ENCODE measurements at regions of chr13 and their contacts with region 1.

Region 1: GRCh38 chr13:99969919-99970621 is 1.5 kb downstream of the ZIC5 start:
- DNase-seq: no peak
- ATAC-seq: peak; percentile 83
- H3K4me3 ChIP-seq: peak overlapping the region; percentile 59 to 69
- H3K27ac ChIP-seq: peak overlapping the region; percentile 95
- H3K4me1 ChIP-seq: peaks cover 16% of the 10 kb centered on the region
- H3K27me3 ChIP-seq: no peaks in the 10 kb centered on the region
- CTCF ChIP-seq: no peak

Region 2: DNA sequence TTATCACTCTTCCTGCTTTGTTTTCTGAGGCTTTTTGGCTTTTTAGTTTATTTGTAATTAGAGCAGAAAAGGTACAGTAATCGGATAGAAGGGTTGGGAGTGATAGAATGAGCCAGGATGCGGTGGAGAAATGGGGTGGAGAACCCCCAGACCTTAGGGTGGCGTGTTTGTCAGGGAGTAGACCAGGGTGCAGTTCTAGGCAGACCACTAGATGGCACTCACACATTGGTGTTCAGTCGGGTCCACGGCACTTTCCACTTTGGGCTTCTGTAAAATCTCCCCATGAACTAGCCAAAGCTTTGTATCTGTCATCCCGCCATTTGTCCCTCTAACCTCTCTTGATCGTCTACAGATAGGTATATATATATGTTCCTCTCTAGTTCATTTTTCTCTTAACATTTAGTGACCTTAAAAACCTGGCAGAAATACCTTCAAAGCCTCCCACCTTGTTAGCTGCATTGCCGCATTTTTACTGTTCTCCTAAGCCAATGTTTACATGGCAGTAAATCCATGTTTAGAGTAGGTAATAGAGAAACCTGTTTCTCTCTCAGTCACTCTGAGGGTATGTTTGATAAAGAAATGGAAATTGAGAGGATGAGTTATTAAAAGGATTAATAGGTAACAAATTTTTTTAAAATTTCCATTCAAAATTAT is 313.9 kb before region 1 on chr13:
- CTCF ChIA-PET with region 1: no interaction called
- POLR2A ChIA-PET with region 1: no interaction called
- in situ Hi-C with region 1: no loop called
- intact Hi-C with region 1: loop called (anchors 5 kb)
- DNase-seq: peak; percentile 61
- ATAC-seq: peak; percentile 87
- H3K4me3 ChIP-seq: no peak overlapping the region
- H3K27ac ChIP-seq: peak overlapping the region; percentile 44; the same call in 1 of the 2 replicates
- H3K4me1 ChIP-seq: peaks cover 12% of the 10 kb centered on the region
- H3K27me3 ChIP-seq: no peaks in the 10 kb centered on the region
- CTCF ChIP-seq: peak; percentile 78

Region 3: DNA sequence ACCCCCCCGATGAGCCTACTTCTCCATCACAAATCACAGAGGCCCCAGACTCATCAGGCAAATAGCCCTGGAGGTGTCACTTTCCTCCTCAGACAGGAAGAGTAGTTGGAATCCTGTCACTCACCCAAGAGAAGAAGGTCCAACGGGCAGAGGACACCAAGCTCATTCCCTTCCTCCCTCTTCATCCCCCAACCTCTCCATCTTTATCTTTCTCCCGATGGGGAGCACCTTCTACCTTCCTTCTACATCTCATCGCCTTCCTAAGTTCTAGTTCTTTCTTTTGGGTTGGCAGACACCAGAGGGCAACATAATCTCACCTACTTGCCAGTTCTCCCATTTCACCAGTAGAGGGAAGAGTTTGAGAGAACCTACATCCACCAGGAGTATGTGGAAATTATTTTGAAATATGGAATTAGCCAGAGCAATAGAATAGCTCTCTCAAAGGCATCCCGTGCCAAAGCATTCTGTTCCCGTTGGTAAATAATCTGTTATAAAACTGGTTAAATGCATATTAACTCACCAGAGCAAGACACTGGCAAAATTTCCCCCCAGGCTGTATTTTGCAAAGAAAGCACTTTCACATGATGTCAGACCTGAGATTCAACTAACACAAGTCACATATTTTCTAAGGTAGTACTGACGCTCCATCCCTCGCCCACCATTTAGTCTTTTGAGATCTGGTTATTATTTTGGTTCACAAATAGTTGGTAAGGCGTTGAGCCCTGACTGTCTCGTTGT is 53.5 kb before region 1 on chr13:
- CTCF ChIA-PET with region 1: no interaction called
- POLR2A ChIA-PET with region 1: no interaction called
- in situ Hi-C with region 1: no loop called
- intact Hi-C with region 1: loop called (anchors 5 kb)
- DNase-seq: peak; percentile 61
- ATAC-seq: peak; percentile 96
- H3K4me3 ChIP-seq: no peak overlapping the region
- H3K27ac ChIP-seq: peak overlapping the region; percentile 39; the same call in 1 of the 2 replicates
- H3K4me1 ChIP-seq: no peaks in the 10 kb centered on the region; the same call in none of the 2 replicates
- H3K27me3 ChIP-seq: no peaks in the 10 kb centered on the region
- CTCF ChIP-seq: peak; percentile 78

Measured in Panc1 (cell line).